IMR-90 (cell line): ENCODE measurements at regions of chr16 and their contacts with region 1.

Region 1: GRCh38 chr16:67029249-67030096 is 524 bp downstream of the CBFB start:
- DNase-seq: peak; percentile 52
- ATAC-seq: peak; percentile 62
- H3K4me3 ChIP-seq: peak overlapping the region; percentile 85
- H3K27ac ChIP-seq: peak overlapping the region; percentile 92
- H3K4me1 ChIP-seq: peaks cover 6% of the 10 kb centered on the region
- H3K27me3 ChIP-seq: no peaks in the 10 kb centered on the region
- CTCF ChIP-seq: no peak
- POLR2A ChIP-seq: peak; percentile 63
- RAD21 ChIP-seq: no peak

Region 2: GRCh38 chr16:67000384-67001351 is 28.8 kb before region 1 on chr16:
- CTCF ChIA-PET with region 1: no interaction called
- POLR2A ChIA-PET with region 1: interaction called, 21 read pairs
- dilution Hi-C with region 1: no loop called
- in situ Hi-C with region 1: no loop called
- intact Hi-C with region 1: no loop called
- DNase-seq: no peak
- ATAC-seq: peak; percentile 85
- H3K4me3 ChIP-seq: peak overlapping the region; percentile 65
- H3K27ac ChIP-seq: no peak overlapping the region
- H3K4me1 ChIP-seq: peaks cover 6% of the 10 kb centered on the region; the same call in 1 of the 2 replicates
- H3K27me3 ChIP-seq: peaks cover 24% of the 10 kb centered on the region
- CTCF ChIP-seq: no peak
- POLR2A ChIP-seq: no peak
- RAD21 ChIP-seq: no peak

Region 3: GRCh38 chr16:67091906-67092566 is 62.6 kb after region 1 on chr16:
- CTCF ChIA-PET with region 1: no interaction called
- POLR2A ChIA-PET with region 1: no interaction called
- dilution Hi-C with region 1: no loop called
- in situ Hi-C with region 1: no loop called
- intact Hi-C with region 1: loop called (anchors 5 kb)
- DNase-seq: peak; percentile 86
- ATAC-seq: peak; percentile 85
- H3K4me3 ChIP-seq: no peak overlapping the region
- H3K27ac ChIP-seq: no peak overlapping the region
- H3K4me1 ChIP-seq: peaks cover 6% of the 10 kb centered on the region
- H3K27me3 ChIP-seq: no peaks in the 10 kb centered on the region
- CTCF ChIP-seq: no peak
- POLR2A ChIP-seq: no peak
- RAD21 ChIP-seq: no peak